ENCODE measurements at regions of chr10 and their contacts with region 1.

Region 1: GRCh38 chr10:4131407-4132228 is 346.6 kb upstream of the KLF6 start:
- DNase-seq: peak; percentile 85
- H3K4me3 Mint-ChIP-seq: no peak overlapping the region
- H3K27ac Mint-ChIP-seq: no peak overlapping the region
- H3K4me1 Mint-ChIP-seq: peaks cover 50% of the 10 kb centered on the region
- H3K27me3 Mint-ChIP-seq: no peaks in the 10 kb centered on the region

Region 2: DNA sequence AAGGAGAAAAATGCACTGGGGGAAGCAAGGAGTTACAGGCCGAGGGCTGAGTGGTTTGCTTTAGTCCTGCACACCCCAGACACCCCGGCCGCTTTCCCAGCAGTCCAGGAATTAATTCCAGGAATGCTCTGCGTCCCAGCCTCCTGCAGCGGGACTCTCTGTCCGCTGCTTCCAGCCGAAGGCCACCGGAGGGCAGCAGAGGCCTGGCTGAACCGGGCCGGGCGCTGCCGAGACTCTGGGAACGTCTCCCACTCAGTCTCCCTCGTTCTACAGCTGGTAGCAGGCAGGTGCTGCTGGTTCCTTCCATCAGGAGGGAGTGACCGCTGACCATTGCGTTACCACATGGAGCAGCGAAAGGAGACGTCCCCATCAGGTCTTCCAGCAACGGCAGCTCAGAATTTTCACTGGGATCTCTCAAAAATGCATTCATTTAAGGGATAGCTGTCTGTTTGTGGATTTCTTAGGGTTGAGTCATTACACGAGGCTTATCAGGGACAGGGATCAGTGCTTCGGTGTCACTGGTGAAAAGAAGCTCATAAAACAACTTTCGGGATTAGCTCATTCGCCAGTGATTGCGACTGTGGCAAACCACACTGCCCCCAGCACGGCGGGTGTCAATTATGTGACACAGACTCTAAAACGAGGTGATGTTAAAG is 934.1 kb before region 1 on chr10:
- intact Hi-C with region 1: loop called (anchors 10 kb)
- DNase-seq: peak; percentile 91
- H3K4me3 Mint-ChIP-seq: peak overlapping the region; percentile 67
- H3K27ac Mint-ChIP-seq: peak overlapping the region; percentile 81
- H3K4me1 Mint-ChIP-seq: peaks cover 17% of the 10 kb centered on the region
- H3K27me3 Mint-ChIP-seq: peaks cover 89% of the 10 kb centered on the region

Region 3: DNA sequence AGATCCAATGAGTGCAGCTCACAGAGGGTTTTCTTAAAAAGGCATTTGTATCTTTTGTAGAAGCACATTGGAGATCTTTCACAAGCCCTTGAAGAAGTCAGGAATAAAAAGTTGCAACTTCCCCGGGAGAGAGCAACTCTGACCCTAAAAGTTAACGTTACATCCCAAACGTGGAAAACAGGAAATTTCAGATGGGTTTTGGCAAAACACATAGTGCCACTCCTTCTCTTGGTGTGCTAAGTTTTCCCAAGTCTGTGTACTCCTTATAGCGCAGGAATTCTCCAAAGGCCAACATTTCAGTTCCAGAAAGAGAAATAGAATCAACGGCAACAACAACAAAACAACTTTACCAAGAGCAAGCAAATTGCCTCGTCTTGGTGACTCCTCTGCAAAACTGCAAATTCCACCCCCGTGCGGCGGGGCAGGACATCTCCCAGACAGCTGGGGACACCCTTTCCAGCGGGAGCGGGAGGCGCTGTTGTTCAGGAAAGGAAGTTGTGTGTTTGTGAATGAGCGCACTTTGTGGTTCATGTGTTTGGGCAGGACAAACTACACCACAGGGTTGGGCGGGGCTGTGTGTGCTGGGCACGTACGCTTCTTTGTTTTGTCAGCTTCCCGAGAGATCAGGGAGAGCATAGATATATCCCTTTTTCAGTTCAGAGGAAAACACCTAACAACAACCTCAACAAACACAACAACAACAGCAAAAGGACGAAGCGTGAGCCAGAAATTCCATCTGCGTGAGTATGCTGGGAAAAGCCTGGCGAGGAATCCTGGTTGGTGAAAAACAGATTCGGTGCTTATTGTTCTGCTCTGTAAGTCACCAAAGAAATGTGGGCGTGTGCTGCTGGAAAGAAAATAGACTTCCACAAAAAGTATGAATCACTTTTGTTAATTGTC is 664.3 kb before region 1 on chr10:
- intact Hi-C with region 1: loop called (anchors 5 kb)
- DNase-seq: peak; percentile 79
- H3K4me3 Mint-ChIP-seq: peak overlapping the region; percentile 82
- H3K27ac Mint-ChIP-seq: peak overlapping the region; percentile 96
- H3K4me1 Mint-ChIP-seq: peaks cover 51% of the 10 kb centered on the region
- H3K27me3 Mint-ChIP-seq: no peaks in the 10 kb centered on the region

Region 4: GRCh38 chr10:3835770-3836169 is 295.8 kb before region 1 on chr10:
- intact Hi-C with region 1: loop called (anchors 1 kb)
- DNase-seq: no peak
- H3K4me3 Mint-ChIP-seq: no peak overlapping the region
- H3K27ac Mint-ChIP-seq: peak overlapping the region; percentile 85
- H3K4me1 Mint-ChIP-seq: peaks cover 45% of the 10 kb centered on the region
- H3K27me3 Mint-ChIP-seq: no peaks in the 10 kb centered on the region

Region 5: GRCh38 chr10:3972460-3973301 is 158.9 kb before region 1 on chr10:
- intact Hi-C with region 1: loop called (anchors 5 kb)
- DNase-seq: peak; percentile 87
- H3K4me3 Mint-ChIP-seq: peak overlapping the region; percentile 88
- H3K27ac Mint-ChIP-seq: peak overlapping the region; percentile 99
- H3K4me1 Mint-ChIP-seq: peaks cover 41% of the 10 kb centered on the region
- H3K27me3 Mint-ChIP-seq: no peaks in the 10 kb centered on the region

Region 6: DNA sequence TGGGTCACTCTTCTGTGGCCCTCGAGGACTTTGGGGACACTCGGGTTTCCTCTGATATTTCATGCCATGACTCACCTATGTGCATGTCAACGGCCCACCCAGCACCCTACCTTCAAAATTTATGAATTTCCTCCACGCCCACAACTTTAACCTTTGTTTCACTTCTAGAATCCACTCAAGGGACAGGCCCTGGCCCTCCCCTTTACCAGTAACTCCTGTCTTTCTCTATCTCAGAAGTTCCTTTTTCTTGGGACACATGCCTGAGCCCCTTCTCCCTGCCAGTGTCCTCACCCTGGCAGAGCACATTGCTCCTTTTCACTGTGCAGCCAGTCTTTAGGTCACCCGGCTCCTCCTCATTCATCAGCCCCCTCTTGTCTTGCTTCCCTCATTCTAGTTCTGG is 64.1 kb before region 1 on chr10:
- intact Hi-C with region 1: loop called (anchors 2 kb)
- DNase-seq: peak; percentile 69
- H3K4me3 Mint-ChIP-seq: no peak overlapping the region
- H3K27ac Mint-ChIP-seq: no peak overlapping the region
- H3K4me1 Mint-ChIP-seq: peaks cover 15% of the 10 kb centered on the region
- H3K27me3 Mint-ChIP-seq: no peaks in the 10 kb centered on the region

Region 7: GRCh38 chr10:4344511-4344994 is 212.9 kb after region 1 on chr10:
- intact Hi-C with region 1: loop called (anchors 2 kb)
- DNase-seq: no peak
- H3K4me3 Mint-ChIP-seq: no peak overlapping the region
- H3K27ac Mint-ChIP-seq: peak overlapping the region; percentile 40
- H3K4me1 Mint-ChIP-seq: peaks cover 19% of the 10 kb centered on the region
- H3K27me3 Mint-ChIP-seq: peaks cover 3% of the 10 kb centered on the region

Region 8: GRCh38 chr10:4391683-4392082 is 260.1 kb after region 1 on chr10:
- intact Hi-C with region 1: no loop called
- DNase-seq: no peak
- H3K4me3 Mint-ChIP-seq: no peak overlapping the region
- H3K27ac Mint-ChIP-seq: no peak overlapping the region
- H3K4me1 Mint-ChIP-seq: no peaks in the 10 kb centered on the region
- H3K27me3 Mint-ChIP-seq: peaks cover 17% of the 10 kb centered on the region

Measured in activated CD4-positive, alpha-beta T cell treated with anti-CD3 and anti-CD28 coated beads, Interleukin-2, amount 10 ng/mL, durations not matched to agents 24 days and 14 days (primary cell).